Mammary epithelial cell (primary cell): ENCODE measurements at regions of chr13 and their contacts with region 1.

Region 1: GRCh38 chr13:39051157-39051556 is 12.9 kb downstream of the NHLRC3 start:
- DNase-seq: peak; percentile 22
- H3K4me3 ChIP-seq: no peak overlapping the region
- H3K27ac ChIP-seq: no peak overlapping the region
- H3K4me1 ChIP-seq: peaks cover 10% of the 10 kb centered on the region
- H3K27me3 ChIP-seq: no peaks in the 10 kb centered on the region
- CTCF ChIP-seq: peak; percentile 22 to 46

Region 2: GRCh38 chr13:39263033-39263432 is 211.9 kb after region 1 on chr13:
- CTCF ChIA-PET with region 1: no interaction called
- dilution Hi-C with region 1: no loop called
- in situ Hi-C with region 1: no loop called
- intact Hi-C with region 1: loop called (anchors 1 kb)
- DNase-seq: peak; percentile 37
- H3K4me3 ChIP-seq: no peak overlapping the region
- H3K27ac ChIP-seq: no peak overlapping the region
- H3K4me1 ChIP-seq: no peaks in the 10 kb centered on the region
- H3K27me3 ChIP-seq: no peaks in the 10 kb centered on the region
- CTCF ChIP-seq: peak; percentile 77 to 78